Activated CD8-positive, alpha-beta T cell treated with anti-CD3 and anti-CD28 coated beads for 36 hours (primary cell): ENCODE measurements at regions of chr22 and their contacts with region 1.

Region 1: DNA sequence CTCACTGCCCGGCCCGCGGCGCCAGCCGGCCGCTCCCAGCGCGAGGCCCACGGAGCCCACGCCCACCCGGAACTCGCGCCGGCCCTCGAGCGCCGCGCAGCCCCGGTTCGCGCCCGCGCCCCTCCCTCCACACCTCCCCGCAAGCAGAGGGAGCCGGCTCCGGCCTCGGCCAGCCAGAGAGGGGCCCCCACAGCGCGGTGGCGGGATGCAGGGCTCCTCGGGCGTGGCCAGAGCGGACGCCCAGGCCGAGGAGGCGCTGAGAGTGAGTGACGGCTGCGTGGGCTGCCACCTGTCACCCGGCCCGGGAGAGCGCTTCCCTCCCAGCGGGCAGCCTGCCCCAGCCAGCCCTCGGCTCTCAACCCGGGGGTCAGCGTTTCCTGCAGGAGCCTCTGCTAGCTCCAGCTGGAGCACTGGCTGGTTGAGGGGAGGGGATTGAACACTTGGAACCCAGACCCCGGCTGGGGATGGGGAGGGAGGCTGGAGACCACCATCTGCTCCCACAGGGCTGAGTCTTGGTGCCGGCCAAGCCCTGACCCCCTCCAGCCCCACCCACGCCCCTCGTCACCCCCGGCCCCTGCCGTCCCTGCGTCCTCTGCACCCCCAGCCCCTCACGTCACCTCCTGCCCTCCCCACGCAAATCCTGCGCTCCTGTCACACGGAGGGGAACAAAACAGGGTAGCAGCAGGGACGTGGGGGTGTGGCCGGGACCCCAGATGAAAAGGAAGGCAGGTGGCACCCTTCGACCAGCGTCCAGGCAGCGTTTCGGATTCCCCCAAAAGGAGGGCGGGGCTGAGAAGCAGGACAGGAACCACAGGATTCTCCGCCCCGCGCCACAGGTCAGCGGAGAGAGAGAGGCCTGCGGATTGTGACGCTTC is 157.0 kb downstream of the BRD1 start:
- DNase-seq: peak; percentile 49
- ATAC-seq: peak; percentile 75
- H3K4me3 Mint-ChIP-seq: peak overlapping the region; percentile 34
- H3K27ac Mint-ChIP-seq: no peak overlapping the region
- H3K4me1 Mint-ChIP-seq: peaks cover 23% of the 10 kb centered on the region
- H3K27me3 Mint-ChIP-seq: peaks cover 27% of the 10 kb centered on the region
- CTCF ChIP-seq: no peak

Region 2: GRCh38 chr22:49657275-49657975 is 13.3 kb before region 1 on chr22:
- CTCF ChIA-PET with region 1: interaction called, 5 read pairs
- POLR2A ChIA-PET with region 1: interaction called, 10 read pairs
- intact Hi-C with region 1: no loop called
- DNase-seq: peak; percentile 88
- ATAC-seq: peak; percentile 81
- H3K4me3 Mint-ChIP-seq: peak overlapping the region; percentile 97
- H3K27ac Mint-ChIP-seq: peak overlapping the region; percentile 85
- H3K4me1 Mint-ChIP-seq: peaks cover 39% of the 10 kb centered on the region
- H3K27me3 Mint-ChIP-seq: no peaks in the 10 kb centered on the region
- CTCF ChIP-seq: no peak

Region 3: GRCh38 chr22:49693416-49693815 is 22.7 kb after region 1 on chr22:
- CTCF ChIA-PET with region 1: no interaction called
- POLR2A ChIA-PET with region 1: no interaction called
- intact Hi-C with region 1: no loop called
- DNase-seq: no peak
- ATAC-seq: no peak
- H3K4me3 Mint-ChIP-seq: no peak overlapping the region
- H3K27ac Mint-ChIP-seq: no peak overlapping the region
- H3K4me1 Mint-ChIP-seq: no peaks in the 10 kb centered on the region
- H3K27me3 Mint-ChIP-seq: no peaks in the 10 kb centered on the region
- CTCF ChIP-seq: no peak